T-cell (primary cell): ENCODE measurements at regions of chr9 and their contacts with region 1.

Region 1: GRCh38 chr9:121171236-121171635 is 30.4 kb downstream of the RAB14 start:
- DNase-seq: no peak
- ATAC-seq: no peak
- H3K4me3 ChIP-seq: no peak overlapping the region
- H3K4me3 Mint-ChIP-seq: no peak overlapping the region
- H3K27ac ChIP-seq: no peak overlapping the region
- H3K27ac Mint-ChIP-seq: peak overlapping the region; percentile 2 to 69
- H3K4me1 ChIP-seq: peaks cover 8 to 10% of the 10 kb centered on the region in 2 experiments
- H3K4me1 Mint-ChIP-seq: peaks cover 20 to 23% (median 22%) of the 10 kb centered on the region in 3 donors
- H3K27me3 ChIP-seq: no peaks in the 10 kb centered on the region
- H3K27me3 Mint-ChIP-seq: no peaks in the 10 kb centered on the region

Region 2: DNA sequence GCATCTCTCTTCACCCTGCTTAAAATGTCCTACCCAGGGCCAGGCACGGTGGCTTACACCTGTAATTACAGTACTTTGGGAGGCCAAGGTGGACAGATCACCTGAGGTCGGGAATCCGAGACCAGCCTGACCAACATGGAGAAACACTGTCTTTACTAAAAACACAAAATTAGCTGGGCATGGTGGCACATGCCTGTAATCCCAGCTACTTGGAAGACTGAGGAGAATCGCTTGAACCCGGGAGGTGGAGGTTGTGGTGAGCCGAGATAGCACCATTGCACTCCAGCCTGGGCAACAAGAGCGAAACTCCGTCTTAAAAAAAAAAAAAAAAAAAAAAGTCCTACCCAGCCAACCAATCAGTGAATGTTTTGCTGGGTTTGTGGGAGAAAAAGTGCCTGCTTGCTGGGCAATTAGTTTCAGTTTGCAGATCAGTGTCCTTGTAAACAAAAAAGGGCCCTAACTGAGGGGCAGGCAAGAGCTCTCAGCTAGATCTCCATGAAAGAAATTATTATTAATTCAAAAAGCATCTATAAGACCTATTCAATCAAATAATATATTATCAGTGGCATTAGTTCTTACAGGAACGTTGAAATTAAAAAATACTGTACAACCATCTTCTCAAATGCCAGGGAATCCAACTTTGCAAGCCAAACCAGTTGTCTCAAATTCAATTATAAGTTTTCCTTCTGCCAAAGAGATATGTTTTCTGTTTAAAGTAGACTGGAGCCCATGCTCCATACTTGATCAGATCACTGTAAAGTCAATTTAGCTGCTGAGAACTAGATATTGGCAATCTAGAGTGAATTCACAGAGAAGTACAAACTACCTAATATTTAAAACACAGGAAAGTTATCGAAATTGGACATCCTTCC is 460.9 kb before region 1 on chr9:
- CTCF ChIA-PET with region 1: no interaction called
- POLR2A ChIA-PET with region 1: no interaction called
- DNase-seq: peak in 14 of 35 experiments; percentile 8 to 71 (median 16)
- ATAC-seq: no peak
- H3K4me3 ChIP-seq: peak overlapping the region in 1 of 2 donors; percentile 44
- H3K4me3 Mint-ChIP-seq: peak overlapping the region; percentile 76 to 98 (median 88)
- H3K27ac ChIP-seq: peak overlapping the region; percentile 70
- H3K27ac Mint-ChIP-seq: peak overlapping the region; percentile 92
- H3K4me1 ChIP-seq: peaks cover 20 to 33% of the 10 kb centered on the region in 2 experiments
- H3K4me1 Mint-ChIP-seq: peaks cover 53 to 59% (median 54%) of the 10 kb centered on the region in 3 donors
- H3K27me3 ChIP-seq: no peaks in the 10 kb centered on the region
- H3K27me3 Mint-ChIP-seq: no peaks in the 10 kb centered on the region

Region 3: DNA sequence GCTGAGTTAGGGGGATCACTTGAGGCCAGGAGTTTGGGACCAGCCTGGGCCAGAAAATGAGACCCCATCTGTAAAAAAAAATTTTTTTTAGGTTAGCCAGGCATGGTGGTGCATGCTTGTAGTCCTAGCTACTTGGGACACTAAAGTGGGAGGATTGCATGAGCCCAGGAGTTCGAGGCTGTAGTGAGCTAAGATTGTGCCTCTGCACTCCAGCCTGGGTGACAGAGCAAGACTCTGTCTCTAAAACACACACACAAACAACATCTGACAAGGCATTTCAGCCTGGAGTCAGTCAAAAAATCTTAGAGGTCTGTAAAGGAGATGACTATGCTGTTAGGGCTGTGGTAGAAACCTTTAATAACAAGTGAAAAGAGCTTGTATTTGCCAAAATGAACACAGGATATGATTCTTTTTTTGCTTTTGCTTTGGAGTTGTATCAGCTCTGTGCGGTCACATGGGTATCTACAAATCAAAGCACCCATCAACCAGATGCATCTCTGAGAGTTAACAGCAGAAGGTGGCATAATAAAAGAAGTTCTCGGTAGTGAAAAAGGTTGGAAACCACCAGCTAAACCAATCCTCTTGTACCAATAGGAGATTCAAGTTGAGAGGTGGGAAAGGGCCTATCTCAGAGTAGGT is 324.9 kb before region 1 on chr9:
- CTCF ChIA-PET with region 1: interaction called in 1 of 2 experiments, 4 read pairs
- POLR2A ChIA-PET with region 1: interaction called in 1 of 2 experiments, 15 read pairs
- DNase-seq: peak in 21 of 35 experiments; percentile 15 to 82 (median 39)
- ATAC-seq: peak; percentile 53 to 72 (median 60)
- H3K4me3 ChIP-seq: no peak overlapping the region
- H3K4me3 Mint-ChIP-seq: peak overlapping the region; percentile 45 to 99 (median 49)
- H3K27ac ChIP-seq: peak overlapping the region; percentile 71
- H3K27ac Mint-ChIP-seq: peak overlapping the region; percentile 97
- H3K4me1 ChIP-seq: peaks cover 44 to 45% of the 10 kb centered on the region in 2 experiments
- H3K4me1 Mint-ChIP-seq: peaks cover 70 to 75% (median 71%) of the 10 kb centered on the region in 3 donors
- H3K27me3 ChIP-seq: no peaks in the 10 kb centered on the region
- H3K27me3 Mint-ChIP-seq: no peaks in the 10 kb centered on the region

Region 4: DNA sequence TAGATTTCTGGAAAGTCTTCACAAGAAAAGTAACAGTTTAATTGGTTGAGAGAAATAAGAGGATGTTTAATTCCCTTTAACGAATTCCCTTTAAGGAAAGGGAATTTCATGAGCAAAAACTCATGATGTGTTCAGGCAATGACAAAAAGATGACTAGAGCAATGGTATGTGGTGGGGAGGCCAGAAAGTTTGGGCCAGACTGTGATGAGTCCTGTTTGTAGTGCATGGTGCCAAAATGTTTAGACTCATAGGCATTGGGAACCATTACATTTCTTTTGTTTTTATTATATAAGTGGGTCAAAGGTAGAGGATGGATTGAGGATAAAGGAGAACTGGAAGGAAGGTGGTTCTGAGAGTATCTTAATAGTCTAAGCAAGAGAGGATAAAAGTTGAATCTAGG is 85.6 kb before region 1 on chr9:
- CTCF ChIA-PET with region 1: no interaction called
- POLR2A ChIA-PET with region 1: no interaction called
- DNase-seq: no peak
- ATAC-seq: no peak
- H3K4me3 ChIP-seq: no peak overlapping the region
- H3K4me3 Mint-ChIP-seq: no peak overlapping the region
- H3K27ac ChIP-seq: no peak overlapping the region
- H3K27ac Mint-ChIP-seq: no peak overlapping the region
- H3K4me1 ChIP-seq: peaks cover 0 to 2% of the 10 kb centered on the region in 2 experiments
- H3K4me1 Mint-ChIP-seq: peaks cover 28 to 30% (median 30%) of the 10 kb centered on the region in 3 donors
- H3K27me3 ChIP-seq: no peaks in the 10 kb centered on the region
- H3K27me3 Mint-ChIP-seq: no peaks in the 10 kb centered on the region

Region 5: DNA sequence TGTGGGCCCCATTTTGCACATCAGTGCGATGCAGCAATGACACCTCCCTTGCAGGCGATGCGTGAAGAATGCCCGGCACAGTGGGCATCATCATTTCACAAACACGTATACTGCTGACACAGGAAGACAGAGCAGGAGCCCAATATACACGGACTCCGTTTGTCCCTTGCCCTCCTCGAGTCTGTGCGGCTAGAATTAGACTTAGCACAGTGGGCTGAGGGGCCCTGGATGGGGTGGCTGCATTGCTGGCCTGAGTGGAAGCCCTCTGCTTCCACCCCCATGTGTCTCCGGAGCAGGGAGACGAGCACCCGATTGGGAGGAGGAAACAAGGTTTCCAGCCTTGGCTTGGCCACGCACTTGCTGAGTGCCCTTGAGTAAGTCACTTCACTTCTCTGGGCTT is 137.5 kb after region 1 on chr9:
- CTCF ChIA-PET with region 1: no interaction called
- POLR2A ChIA-PET with region 1: no interaction called
- DNase-seq: no peak
- ATAC-seq: no peak
- H3K4me3 ChIP-seq: no peak overlapping the region
- H3K4me3 Mint-ChIP-seq: no peak overlapping the region
- H3K27ac ChIP-seq: no peak overlapping the region
- H3K27ac Mint-ChIP-seq: no peak overlapping the region
- H3K4me1 ChIP-seq: no peaks in the 10 kb centered on the region
- H3K4me1 Mint-ChIP-seq: no peaks in the 10 kb centered on the region
- H3K27me3 ChIP-seq: no peaks in the 10 kb centered on the region
- H3K27me3 Mint-ChIP-seq: no peaks in the 10 kb centered on the region